ENCODE measurements at regions of chr5 and their contacts with region 1.

Region 1: GRCh38 chr5:168681556-168682183 is 102.5 kb upstream of the PANK3 start:
- DNase-seq: peak in 1 of 2 donors; percentile 70
- ATAC-seq: peak; percentile 45
- H3K4me3 ChIP-seq: no peak overlapping the region
- H3K27ac ChIP-seq: no peak overlapping the region
- H3K4me1 ChIP-seq: no peaks in the 10 kb centered on the region
- H3K27me3 ChIP-seq: no peaks in the 10 kb centered on the region

Region 2: DNA sequence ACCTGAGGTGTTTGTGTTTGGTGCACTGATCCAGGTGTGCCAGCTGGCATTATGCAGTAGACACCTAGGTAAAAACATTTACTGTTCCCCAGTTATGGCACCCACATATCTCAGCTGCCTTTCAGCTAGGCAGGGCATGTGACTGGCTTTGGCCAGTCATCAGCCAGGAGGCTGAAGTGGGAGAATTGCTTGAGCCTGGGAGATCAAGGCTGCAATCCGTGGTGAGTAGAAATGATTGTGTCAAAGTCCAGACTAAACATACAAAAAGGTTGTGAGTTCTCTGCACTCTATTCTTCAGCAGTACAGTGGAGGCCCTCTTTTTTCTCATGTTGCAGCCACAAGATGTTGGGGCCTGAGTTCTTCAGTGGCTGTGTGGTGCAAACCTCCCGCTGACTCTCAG is 155.8 kb before region 1 on chr5:
- intact Hi-C with region 1: no loop called
- DNase-seq: no peak
- ATAC-seq: no peak
- H3K4me3 ChIP-seq: no peak overlapping the region
- H3K27ac ChIP-seq: no peak overlapping the region
- H3K4me1 ChIP-seq: no peaks in the 10 kb centered on the region
- H3K27me3 ChIP-seq: peaks cover 0 to 2% of the 10 kb centered on the region in 2 donors

Region 3: DNA sequence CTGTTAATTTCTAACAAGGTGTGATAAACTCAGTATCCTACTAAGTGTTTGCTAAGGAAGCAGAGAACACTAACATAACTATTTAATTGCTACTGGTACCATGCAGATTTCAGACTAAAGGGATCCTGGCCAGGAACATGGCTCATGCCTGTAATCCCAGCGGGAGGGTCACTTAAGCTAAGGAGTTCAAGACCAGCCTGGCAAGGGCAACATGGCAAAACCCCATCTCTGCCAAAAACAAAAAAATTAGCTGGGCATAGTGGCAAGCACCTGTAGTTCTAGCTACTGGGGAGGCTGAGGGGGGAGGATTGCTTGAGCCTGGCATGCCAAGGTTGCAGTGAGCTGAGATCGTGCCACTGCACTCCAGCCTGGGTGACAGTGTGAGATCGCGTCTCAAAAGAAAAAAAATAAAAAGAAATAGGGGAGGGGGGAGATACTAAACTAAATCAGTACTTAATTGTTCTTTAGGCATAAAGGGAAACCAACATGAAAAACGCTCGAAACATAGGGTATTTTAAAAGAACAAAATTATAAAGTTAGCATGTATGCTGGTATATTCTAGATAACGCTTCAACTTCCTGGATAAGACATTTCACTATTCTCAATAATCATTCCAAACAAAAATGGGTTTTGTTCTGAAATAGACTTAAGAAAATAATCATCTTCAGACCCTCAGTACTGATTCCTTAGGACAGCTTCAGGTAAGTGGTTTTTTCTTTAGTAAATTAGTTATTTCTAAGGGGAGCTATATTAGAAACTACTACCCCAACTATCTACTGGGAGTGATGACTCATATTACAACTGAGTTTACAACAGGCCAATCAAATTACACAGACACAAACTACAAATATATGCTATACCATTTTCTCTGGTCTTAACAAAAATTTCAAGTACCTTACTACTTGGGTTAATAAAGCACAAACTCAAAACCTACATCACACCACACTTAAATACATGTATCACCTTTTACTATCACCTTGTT is 106.0 kb before region 1 on chr5:
- intact Hi-C with region 1: no loop called
- DNase-seq: no peak
- ATAC-seq: no peak
- H3K4me3 ChIP-seq: no peak overlapping the region
- H3K27ac ChIP-seq: no peak overlapping the region
- H3K4me1 ChIP-seq: no peaks in the 10 kb centered on the region
- H3K27me3 ChIP-seq: no peaks in the 10 kb centered on the region

Region 4: GRCh38 chr5:169577951-169578350 is 896.3 kb after region 1 on chr5:
- intact Hi-C with region 1: loop called (anchors 2 to 10 kb)
- DNase-seq: no peak
- ATAC-seq: no peak
- H3K4me3 ChIP-seq: no peak overlapping the region
- H3K27ac ChIP-seq: no peak overlapping the region
- H3K4me1 ChIP-seq: peaks cover 0 to 2% of the 10 kb centered on the region in 2 donors
- H3K27me3 ChIP-seq: no peaks in the 10 kb centered on the region

Measured in aorta (tissue), 5 donors.